CD8-positive, alpha-beta T cell (primary cell): ENCODE measurements at regions of chr6 and their contacts with region 1.

Region 1: GRCh38 chr6:149565527-149566409 is at the start of gene GINM1:
- DNase-seq: peak; percentile 91 to 97 (median 94)
- ATAC-seq: peak; percentile 83
- H3K4me3 ChIP-seq: peak within 1 kb of the TSS; percentile 84 to 98
- H3K4me3 Mint-ChIP-seq: peak within 1 kb of the TSS; percentile 88
- H3K27ac ChIP-seq: peak within 1 kb of the TSS; percentile 75 to 88
- H3K27ac Mint-ChIP-seq: peak within 1 kb of the TSS; percentile 95
- H3K4me1 ChIP-seq: peaks cover 7% of the 10 kb centered on the region
- H3K4me1 Mint-ChIP-seq: peaks cover 18% of the 10 kb centered on the region
- H3K27me3 ChIP-seq: no peaks in the 10 kb centered on the region
- H3K27me3 Mint-ChIP-seq: no peaks in the 10 kb centered on the region
- CTCF ChIP-seq: peak; percentile 78
- total RNA-seq, gene GINM1: 32.7 to 35.2 TPM

Region 2: DNA sequence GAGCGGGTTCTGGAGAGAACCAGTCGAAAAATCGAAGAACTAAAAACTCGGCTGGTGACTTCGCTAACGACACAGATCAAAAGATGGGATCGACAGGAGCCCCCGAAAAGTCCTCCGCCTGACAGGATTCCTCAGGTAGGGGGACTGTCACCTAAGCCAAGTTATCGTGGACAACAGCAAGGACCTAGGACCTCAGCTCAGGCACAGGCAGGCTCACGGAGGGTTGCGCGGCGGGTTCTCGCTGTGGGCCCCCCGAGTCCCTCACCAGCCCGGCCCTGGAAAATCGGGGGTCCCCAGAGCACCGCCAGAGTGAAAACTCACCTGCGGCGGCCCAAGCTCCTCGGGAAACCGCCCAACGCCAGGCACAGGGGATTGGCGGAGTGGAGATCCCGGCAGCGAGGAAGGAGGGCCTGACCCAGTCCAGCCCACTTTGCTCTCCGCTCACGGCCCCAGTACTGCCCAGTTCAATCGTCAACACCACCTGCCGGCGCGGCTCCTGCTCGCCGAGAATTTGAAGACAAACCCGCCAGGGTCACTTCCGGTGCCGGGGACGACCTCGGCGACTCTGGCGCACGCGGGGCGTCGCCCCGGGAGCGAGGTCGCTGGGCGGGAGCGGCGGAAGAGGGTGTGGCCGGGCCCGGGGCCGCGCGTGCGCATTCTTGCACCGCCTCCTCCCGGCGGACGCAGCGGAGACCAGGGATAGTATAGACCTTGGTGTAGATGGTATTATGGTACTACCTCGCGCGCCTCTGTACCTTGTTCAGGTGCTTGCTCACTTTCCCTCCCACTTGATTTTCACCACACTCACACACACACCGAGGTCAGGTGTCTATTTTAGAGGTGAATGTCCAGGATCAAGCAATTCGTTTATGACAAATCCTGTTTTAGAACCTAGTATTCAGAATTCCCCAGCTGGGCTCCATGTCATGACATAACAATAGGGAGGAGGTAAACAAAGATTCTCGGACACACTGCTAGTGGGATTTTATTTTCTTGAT is 82.7 kb after region 1 on chr6 and contains the start of gene KATNA1:
- CTCF ChIA-PET with region 1: interaction called, 3 read pairs
- POLR2A ChIA-PET with region 1: no interaction called
- intact Hi-C with region 1: loop called (anchors 1 to 2 kb)
- DNase-seq: peak; percentile 65 to 91 (median 84)
- ATAC-seq: peak; percentile 91
- H3K4me3 ChIP-seq: peak within 1 kb of the TSS; percentile 78 to 97
- H3K4me3 Mint-ChIP-seq: peak within 1 kb of the TSS; percentile 90
- H3K27ac ChIP-seq: peak within 1 kb of the TSS; percentile 77 to 90
- H3K27ac Mint-ChIP-seq: peak within 1 kb of the TSS; percentile 63
- H3K4me1 ChIP-seq: peaks cover 30% of the 10 kb centered on the region
- H3K4me1 Mint-ChIP-seq: peaks cover 37% of the 10 kb centered on the region
- H3K27me3 ChIP-seq: no peaks in the 10 kb centered on the region
- H3K27me3 Mint-ChIP-seq: no peaks in the 10 kb centered on the region
- CTCF ChIP-seq: no peak
- total RNA-seq, gene KATNA1: 18.0 to 20.8 TPM

Region 3: DNA sequence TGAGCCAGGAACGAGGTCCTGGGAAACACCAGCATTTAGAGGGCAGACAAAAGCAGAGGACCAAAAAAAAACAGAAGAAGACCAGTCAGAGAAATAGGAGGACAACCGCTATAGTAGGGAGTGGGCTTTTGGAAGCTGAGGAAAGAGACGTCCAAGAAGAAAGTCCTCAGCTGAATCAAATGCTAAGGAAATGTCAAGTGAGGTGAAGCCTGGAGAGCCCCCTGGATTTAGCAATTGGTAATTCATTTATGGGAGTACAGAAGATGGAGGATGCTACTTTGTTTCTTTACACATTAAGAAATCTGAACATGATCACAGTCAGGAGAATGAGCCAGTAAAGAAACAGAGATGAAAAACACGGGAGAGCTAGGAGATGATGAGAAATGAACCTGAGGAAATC is 257.2 kb after region 1 on chr6:
- CTCF ChIA-PET with region 1: no interaction called
- POLR2A ChIA-PET with region 1: no interaction called
- intact Hi-C with region 1: no loop called
- DNase-seq: no peak
- ATAC-seq: no peak
- H3K4me3 ChIP-seq: no peak overlapping the region
- H3K4me3 Mint-ChIP-seq: no peak overlapping the region
- H3K27ac ChIP-seq: no peak overlapping the region
- H3K27ac Mint-ChIP-seq: no peak overlapping the region
- H3K4me1 ChIP-seq: no peaks in the 10 kb centered on the region
- H3K4me1 Mint-ChIP-seq: no peaks in the 10 kb centered on the region
- H3K27me3 ChIP-seq: no peaks in the 10 kb centered on the region
- H3K27me3 Mint-ChIP-seq: peaks cover 14% of the 10 kb centered on the region
- CTCF ChIP-seq: no peak

Region 4: GRCh38 chr6:150301846-150302519 is 736.2 kb after region 1 on chr6:
- CTCF ChIA-PET with region 1: no interaction called
- POLR2A ChIA-PET with region 1: no interaction called
- intact Hi-C with region 1: no loop called
- DNase-seq: no peak
- ATAC-seq: no peak
- H3K4me3 ChIP-seq: no peak overlapping the region
- H3K4me3 Mint-ChIP-seq: no peak overlapping the region
- H3K27ac ChIP-seq: no peak overlapping the region
- H3K27ac Mint-ChIP-seq: no peak overlapping the region
- H3K4me1 ChIP-seq: no peaks in the 10 kb centered on the region
- H3K4me1 Mint-ChIP-seq: no peaks in the 10 kb centered on the region
- H3K27me3 ChIP-seq: peaks cover 0 to 3% of the 10 kb centered on the region in 2 experiments
- H3K27me3 Mint-ChIP-seq: peaks cover 9% of the 10 kb centered on the region
- CTCF ChIP-seq: no peak

Region 5: GRCh38 chr6:150915880-150916265 is 1350.1 kb after region 1 on chr6:
- CTCF ChIA-PET with region 1: no interaction called
- POLR2A ChIA-PET with region 1: no interaction called
- intact Hi-C with region 1: no loop called
- DNase-seq: no peak
- ATAC-seq: no peak
- H3K4me3 ChIP-seq: no peak overlapping the region
- H3K4me3 Mint-ChIP-seq: no peak overlapping the region
- H3K27ac ChIP-seq: no peak overlapping the region
- H3K27ac Mint-ChIP-seq: no peak overlapping the region
- H3K4me1 ChIP-seq: no peaks in the 10 kb centered on the region
- H3K4me1 Mint-ChIP-seq: no peaks in the 10 kb centered on the region
- H3K27me3 ChIP-seq: no peaks in the 10 kb centered on the region
- H3K27me3 Mint-ChIP-seq: no peaks in the 10 kb centered on the region
- CTCF ChIP-seq: no peak